ENCODE measurements at regions of chr1 and their contacts with region 1.

Region 1: DNA sequence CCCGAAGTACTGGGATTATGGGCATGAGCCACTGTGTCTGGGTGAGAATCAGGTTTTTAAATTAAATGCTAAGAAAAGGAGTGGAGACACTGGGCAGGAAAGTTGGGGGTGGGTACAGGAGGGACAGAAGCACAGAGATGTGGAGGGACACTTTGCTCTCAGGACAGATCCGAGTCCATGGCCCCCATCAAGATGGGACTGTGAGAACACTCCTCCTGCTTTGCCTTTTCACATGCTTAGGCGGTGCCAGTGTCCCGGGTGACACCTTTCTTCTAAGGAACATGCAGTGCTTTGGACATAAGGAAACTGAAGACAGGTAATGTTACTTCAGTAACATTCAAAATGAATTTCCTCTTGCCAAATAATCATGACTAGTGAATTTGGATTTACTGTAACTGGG is 16.7 kb downstream of the SLC25A33 start:
- DNase-seq: no peak
- H3K4me3 Mint-ChIP-seq: no peak overlapping the region
- H3K27ac Mint-ChIP-seq: no peak overlapping the region
- H3K4me1 Mint-ChIP-seq: peaks cover 10% of the 10 kb centered on the region
- H3K27me3 Mint-ChIP-seq: no peaks in the 10 kb centered on the region
- CTCF ChIP-seq: no peak

Region 2: GRCh38 chr1:9327642-9328041 is 228.3 kb before region 1 on chr1:
- CTCF ChIA-PET with region 1: no interaction called
- POLR2A ChIA-PET with region 1: no interaction called
- intact Hi-C with region 1: no loop called
- DNase-seq: no peak
- H3K4me3 Mint-ChIP-seq: no peak overlapping the region
- H3K27ac Mint-ChIP-seq: no peak overlapping the region
- H3K4me1 Mint-ChIP-seq: peaks cover 29% of the 10 kb centered on the region
- H3K27me3 Mint-ChIP-seq: no peaks in the 10 kb centered on the region
- CTCF ChIP-seq: no peak

Region 3: GRCh38 chr1:9539165-9539828 is 16.6 kb before region 1 on chr1 and contains the start of gene SLC25A33:
- CTCF ChIA-PET with region 1: interaction called, 3 read pairs
- POLR2A ChIA-PET with region 1: interaction called, 15 read pairs
- intact Hi-C with region 1: no loop called
- DNase-seq: peak; percentile 97
- H3K4me3 Mint-ChIP-seq: peak within 1 kb of the TSS; percentile 71
- H3K27ac Mint-ChIP-seq: peak within 1 kb of the TSS; percentile 57
- H3K4me1 Mint-ChIP-seq: peaks cover 5% of the 10 kb centered on the region
- H3K27me3 Mint-ChIP-seq: no peaks in the 10 kb centered on the region
- CTCF ChIP-seq: no peak
- total RNA-seq, gene SLC25A33: 6.5 and 8.1 TPM in 2 replicates